ENCODE measurements at regions of chr2 and their contacts with region 1.

Region 1: GRCh38 chr2:25041928-25042320 is at the start of gene EFR3B:
- DNase-seq: peak; percentile 98
- ATAC-seq: peak; percentile 93 to 97 (median 96)
- H3K4me3 ChIP-seq: peak within 1 kb of the TSS; percentile 94
- H3K27ac ChIP-seq: peak within 1 kb of the TSS; percentile 85
- H3K4me1 ChIP-seq: peaks cover 36% of the 10 kb centered on the region
- H3K27me3 ChIP-seq: no peaks in the 10 kb centered on the region
- CTCF ChIP-seq: no peak
- total RNA-seq, gene EFR3B: 1.7 to 12.7 (median 4.0) TPM

Region 2: GRCh38 chr2:24971536-24972314 is 70.2 kb before region 1 on chr2 and contains the start of gene DNAJC27:
- intact Hi-C with region 1: loop called (anchors 5 to 10 kb)
- DNase-seq: peak; percentile 97 to 99
- ATAC-seq: peak; percentile 92 to 95 (median 94)
- H3K4me3 ChIP-seq: peak within 1 kb of the TSS; percentile 79
- H3K27ac ChIP-seq: peak within 1 kb of the TSS; percentile 99
- H3K4me1 ChIP-seq: peaks cover 6% of the 10 kb centered on the region
- H3K27me3 ChIP-seq: no peaks in the 10 kb centered on the region
- CTCF ChIP-seq: no peak
- total RNA-seq, gene DNAJC27: 4.6 to 8.2 (median 7.1) TPM

Region 3: DNA sequence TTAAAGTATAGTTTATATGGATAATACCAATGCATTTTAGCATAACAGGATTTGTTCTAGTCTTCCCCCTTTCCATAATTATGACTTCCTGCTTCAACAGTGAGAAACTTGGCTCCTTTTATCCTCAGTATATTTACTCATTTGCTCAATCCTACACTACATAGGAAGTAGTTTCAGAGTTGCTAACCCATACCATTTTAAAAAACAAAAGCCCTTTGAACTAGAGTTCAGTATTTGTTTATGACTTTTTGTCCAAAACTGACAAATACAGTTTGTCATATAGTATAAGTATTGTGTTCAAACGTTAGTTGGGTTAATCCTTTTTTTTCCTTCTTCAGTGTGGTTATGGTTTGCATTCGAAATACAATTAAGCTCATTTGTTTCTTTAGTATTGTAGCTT is 64.3 kb before region 1 on chr2:
- intact Hi-C with region 1: loop called (anchors 5 to 10 kb)
- DNase-seq: no peak
- ATAC-seq: no peak
- H3K4me3 ChIP-seq: no peak overlapping the region
- H3K27ac ChIP-seq: no peak overlapping the region
- H3K4me1 ChIP-seq: peaks cover 6% of the 10 kb centered on the region
- H3K27me3 ChIP-seq: no peaks in the 10 kb centered on the region
- CTCF ChIP-seq: no peak

Region 4: DNA sequence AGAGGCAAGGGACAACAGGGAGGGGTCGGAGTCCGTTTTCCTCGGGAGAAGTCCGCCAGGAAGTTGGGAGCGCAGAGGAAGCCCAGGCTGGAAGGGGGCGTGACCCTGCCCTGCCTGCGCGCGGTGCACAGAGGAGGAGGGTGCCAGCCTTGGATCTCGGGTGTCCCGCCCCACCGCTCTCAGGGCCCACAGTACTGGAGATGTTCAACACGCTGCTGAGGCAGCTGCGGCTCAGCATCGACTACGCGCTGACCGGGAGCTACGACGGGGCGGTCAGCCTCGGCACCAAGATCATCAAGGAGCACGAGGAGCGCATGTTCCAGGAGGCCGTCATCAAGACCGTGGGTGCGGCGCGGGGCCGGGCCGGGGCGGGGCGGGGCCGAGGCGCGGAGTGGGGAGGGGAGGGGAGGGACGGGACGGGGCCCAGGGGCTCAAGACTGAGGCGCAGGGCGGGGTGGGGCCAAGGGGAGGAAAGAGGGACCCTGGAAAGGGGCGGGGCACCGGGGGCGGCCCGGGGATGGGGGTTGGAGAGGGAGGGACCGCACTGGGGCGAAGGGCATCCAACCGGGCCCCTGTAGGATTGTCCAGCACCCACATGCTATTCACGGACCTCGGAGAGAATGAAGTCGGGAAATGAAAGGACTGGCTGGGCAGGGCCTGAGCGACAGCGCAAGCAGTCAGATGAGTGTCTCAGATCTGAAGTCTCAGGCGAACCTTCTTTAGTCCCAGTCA is 89.8 kb after region 1 on chr2:
- intact Hi-C with region 1: loop called in 1 of 2 experiments (anchors 5 kb)
- DNase-seq: peak; percentile 28 to 58
- ATAC-seq: no peak
- H3K4me3 ChIP-seq: peak overlapping the region; percentile 34
- H3K27ac ChIP-seq: no peak overlapping the region
- H3K4me1 ChIP-seq: no peaks in the 10 kb centered on the region
- H3K27me3 ChIP-seq: no peaks in the 10 kb centered on the region
- CTCF ChIP-seq: no peak

Region 5: DNA sequence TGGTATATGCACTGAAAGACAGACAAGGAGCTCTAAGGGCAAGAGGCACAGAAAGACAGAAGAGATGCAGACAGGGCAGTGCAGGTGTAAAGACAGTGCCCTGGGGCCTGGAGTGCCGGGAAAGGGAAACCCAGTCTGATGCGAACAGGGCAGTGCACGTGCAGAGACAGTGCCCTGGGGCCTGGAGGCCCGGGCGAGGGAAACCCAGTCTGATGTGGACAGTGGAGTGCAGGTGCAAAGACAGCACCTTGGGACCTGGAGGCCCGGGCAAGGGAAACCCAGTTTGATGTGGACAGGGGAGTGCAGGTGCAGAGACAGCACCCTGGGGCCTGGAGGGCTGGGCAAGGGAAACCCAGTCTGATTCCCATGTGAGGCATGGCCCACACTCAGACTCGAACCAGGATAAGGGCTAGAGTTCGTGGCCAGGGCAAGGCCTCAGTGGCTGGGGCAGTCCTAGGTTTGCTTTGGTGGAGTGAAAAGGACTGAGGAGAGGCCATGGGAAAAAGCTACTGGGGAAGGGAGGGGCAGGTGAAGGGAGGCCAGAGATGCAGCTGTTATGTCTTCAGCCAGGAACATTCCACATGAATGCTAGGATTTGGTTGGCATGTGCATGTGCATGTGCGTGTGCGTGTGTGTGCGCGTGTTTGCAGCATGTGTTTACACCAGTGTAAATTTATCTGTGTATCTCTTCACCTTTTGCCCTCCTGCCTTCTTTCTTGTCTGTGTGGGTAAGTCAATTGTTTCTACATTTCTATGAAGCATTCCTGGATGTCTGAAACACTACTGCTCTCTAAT is 338.9 kb after region 1 on chr2:
- intact Hi-C with region 1: no loop called
- DNase-seq: peak in 1 of 2 donors; percentile 76
- ATAC-seq: peak; percentile 69 to 86 (median 76)
- H3K4me3 ChIP-seq: no peak overlapping the region
- H3K27ac ChIP-seq: peak overlapping the region; percentile 46
- H3K4me1 ChIP-seq: peaks cover 32% of the 10 kb centered on the region
- H3K27me3 ChIP-seq: no peaks in the 10 kb centered on the region
- CTCF ChIP-seq: no peak